Activated T-helper 1 cell treated with anti-CD3 and anti-CD28 coated beads, Interleukin-12 subunit alpha, Interleukin-12 subunit beta, Interleukin-2, Interleukin-4 antibody, amounts not matched to agents 30 ng/mL and 10 ng/mL and 1 ng/mL, durations not matched to agents 14 hours and 24 hours and 36 hours (primary cell): ENCODE measurements at regions of chr7 and their contacts with region 1.

Region 1: DNA sequence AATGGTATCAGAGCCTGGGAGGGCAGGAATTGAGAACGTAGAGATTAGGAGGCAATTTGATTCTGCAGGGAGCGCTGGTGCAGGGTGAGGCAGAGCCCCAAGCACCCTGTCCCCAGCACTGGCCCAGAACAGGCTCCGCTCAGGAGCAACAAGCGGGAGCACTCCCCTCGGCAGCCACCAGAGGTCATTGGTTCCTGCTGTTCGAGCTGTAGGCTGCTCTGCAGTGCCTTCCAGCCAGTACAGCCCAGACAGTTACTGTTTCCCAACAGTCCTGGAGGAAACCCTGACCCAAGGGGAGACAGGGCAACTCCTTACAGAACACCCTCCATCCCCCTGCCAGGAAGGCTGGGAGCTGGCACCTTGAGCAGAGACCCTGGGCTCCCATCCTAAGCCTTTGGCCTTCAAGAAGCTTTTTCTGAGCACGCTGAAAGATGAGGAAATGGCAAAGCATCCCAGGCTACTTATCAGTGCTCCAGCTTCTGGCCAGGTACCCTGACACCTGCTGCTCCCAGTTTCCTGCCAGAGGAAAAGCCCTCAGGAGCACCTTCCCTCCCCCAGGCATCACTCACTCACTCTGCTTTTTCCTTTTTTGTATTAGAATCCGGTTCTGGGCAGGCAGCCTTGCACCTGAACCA is 71.2 kb upstream of the EFCAB10 start:
- DNase-seq: peak; percentile 41
- H3K4me3 Mint-ChIP-seq: no peak overlapping the region
- H3K27ac Mint-ChIP-seq: no peak overlapping the region
- H3K4me1 Mint-ChIP-seq: peaks cover 16% of the 10 kb centered on the region
- H3K27me3 Mint-ChIP-seq: no peaks in the 10 kb centered on the region

Region 2: DNA sequence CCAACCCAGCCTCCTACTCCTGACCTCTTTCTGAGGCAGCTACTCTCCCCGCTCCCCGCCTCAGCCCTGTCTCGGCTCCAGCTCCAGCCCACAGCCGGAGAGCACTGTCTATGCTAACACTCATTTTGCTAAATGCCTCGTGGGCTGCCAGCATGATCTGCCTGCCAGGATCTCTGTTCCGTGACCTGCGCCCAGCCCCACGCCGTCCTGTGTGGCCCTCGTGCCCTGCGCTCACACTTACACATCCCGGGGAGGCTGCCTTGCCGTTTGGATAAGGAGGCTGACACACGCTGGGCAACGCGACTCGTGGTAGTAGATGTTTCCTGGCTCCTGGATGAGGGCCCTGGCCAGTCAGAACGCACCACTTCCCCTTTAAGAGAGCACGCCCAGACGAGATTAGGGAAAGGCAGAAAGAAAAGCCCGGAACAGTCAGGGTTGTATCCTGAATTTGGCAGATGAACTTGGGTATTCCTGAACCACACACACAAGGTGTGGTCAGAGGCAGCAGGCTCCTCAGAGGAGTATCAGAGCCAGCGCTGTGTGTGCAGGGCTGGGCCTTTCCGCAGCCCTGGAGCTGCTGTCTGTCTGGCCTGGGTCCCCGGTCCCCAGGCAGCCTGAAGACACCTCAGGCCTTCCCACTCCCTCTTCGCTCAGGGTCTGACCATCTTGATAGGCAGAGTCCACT is 26.5 kb after region 1 on chr7:
- intact Hi-C with region 1: loop called (anchors 2 kb)
- DNase-seq: no peak
- H3K4me3 Mint-ChIP-seq: peak overlapping the region; percentile 89
- H3K27ac Mint-ChIP-seq: peak overlapping the region; percentile 93
- H3K4me1 Mint-ChIP-seq: peaks cover 57% of the 10 kb centered on the region
- H3K27me3 Mint-ChIP-seq: peaks cover 1% of the 10 kb centered on the region

Region 3: GRCh38 chr7:105759670-105760550 is 107.4 kb after region 1 on chr7:
- intact Hi-C with region 1: loop called (anchors 5 kb)
- DNase-seq: no peak
- H3K4me3 Mint-ChIP-seq: no peak overlapping the region
- H3K27ac Mint-ChIP-seq: no peak overlapping the region
- H3K4me1 Mint-ChIP-seq: peaks cover 26% of the 10 kb centered on the region
- H3K27me3 Mint-ChIP-seq: peaks cover 12% of the 10 kb centered on the region

Region 4: GRCh38 chr7:105830391-105831301 is 178.2 kb after region 1 on chr7:
- intact Hi-C with region 1: no loop called
- DNase-seq: no peak
- H3K4me3 Mint-ChIP-seq: no peak overlapping the region
- H3K27ac Mint-ChIP-seq: no peak overlapping the region
- H3K4me1 Mint-ChIP-seq: no peaks in the 10 kb centered on the region
- H3K27me3 Mint-ChIP-seq: peaks cover 27% of the 10 kb centered on the region

Region 5: GRCh38 chr7:106022193-106022821 is 369.8 kb after region 1 on chr7:
- intact Hi-C with region 1: loop called (anchors 5 kb)
- DNase-seq: peak; percentile 56
- H3K4me3 Mint-ChIP-seq: peak overlapping the region; percentile 37
- H3K27ac Mint-ChIP-seq: peak overlapping the region; percentile 77
- H3K4me1 Mint-ChIP-seq: peaks cover 49% of the 10 kb centered on the region
- H3K27me3 Mint-ChIP-seq: peaks cover 13% of the 10 kb centered on the region

Region 6: GRCh38 chr7:106153891-106154449 is 501.5 kb after region 1 on chr7:
- intact Hi-C with region 1: loop called (anchors 10 kb)
- DNase-seq: peak; percentile 57
- H3K4me3 Mint-ChIP-seq: no peak overlapping the region
- H3K27ac Mint-ChIP-seq: peak overlapping the region; percentile 13
- H3K4me1 Mint-ChIP-seq: no peaks in the 10 kb centered on the region
- H3K27me3 Mint-ChIP-seq: peaks cover 41% of the 10 kb centered on the region